Dendritic cell treated with granulocyte-macrophage colony-stimulating factor and Interleukin-4, amounts not matched to agents 40 ng/mL and 50 ng/mL, for 4 days (primary cell): ENCODE measurements at regions of chr14 and their contacts with region 1.

Region 1: DNA sequence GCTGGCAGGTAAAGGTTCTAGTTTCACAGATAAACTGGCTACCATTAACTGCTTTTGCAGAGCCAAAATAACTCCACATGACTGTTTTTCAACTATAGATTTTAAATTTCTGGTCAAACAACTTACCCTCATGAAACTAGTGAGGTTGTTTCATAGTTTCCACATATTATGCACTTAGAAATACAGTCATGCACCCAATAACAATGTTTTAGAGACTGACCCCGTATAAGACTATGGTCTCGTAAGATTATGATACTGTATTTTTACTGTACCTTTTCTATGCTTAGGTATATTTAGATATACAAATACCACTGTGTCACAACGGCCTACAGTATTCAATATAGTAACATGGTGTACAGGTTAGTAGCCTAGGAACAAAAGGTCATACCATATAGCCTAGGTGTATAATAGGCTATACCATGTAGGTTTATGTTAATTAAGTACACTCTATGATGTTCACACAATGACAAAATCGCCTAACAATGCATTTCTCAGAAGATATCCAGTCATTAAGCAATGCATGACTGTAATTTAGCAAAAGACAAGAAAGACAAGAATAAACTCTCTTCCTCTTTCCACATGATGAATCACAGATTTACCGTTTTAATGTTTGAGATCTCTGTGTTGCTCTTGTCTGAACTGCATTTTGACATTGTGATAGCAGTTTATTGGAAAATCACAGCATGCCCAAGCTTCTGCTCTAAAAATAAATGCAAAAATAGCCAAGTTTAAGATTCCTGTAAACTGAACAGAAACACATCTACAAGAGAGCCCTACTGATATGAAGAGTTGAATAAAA is 17.1 kb downstream of the DICER1 start:
- H3K4me3 Mint-ChIP-seq: no peak overlapping the region
- H3K27ac Mint-ChIP-seq: peak overlapping the region; percentile 62
- H3K4me1 Mint-ChIP-seq: peaks cover 37% of the 10 kb centered on the region
- H3K27me3 Mint-ChIP-seq: no peaks in the 10 kb centered on the region

Region 2: GRCh38 chr14:95068080-95068479 is 72.2 kb before region 1 on chr14:
- intact Hi-C with region 1: no loop called
- H3K4me3 Mint-ChIP-seq: no peak overlapping the region
- H3K27ac Mint-ChIP-seq: no peak overlapping the region
- H3K4me1 Mint-ChIP-seq: no peaks in the 10 kb centered on the region
- H3K27me3 Mint-ChIP-seq: peaks cover 13% of the 10 kb centered on the region

Region 3: DNA sequence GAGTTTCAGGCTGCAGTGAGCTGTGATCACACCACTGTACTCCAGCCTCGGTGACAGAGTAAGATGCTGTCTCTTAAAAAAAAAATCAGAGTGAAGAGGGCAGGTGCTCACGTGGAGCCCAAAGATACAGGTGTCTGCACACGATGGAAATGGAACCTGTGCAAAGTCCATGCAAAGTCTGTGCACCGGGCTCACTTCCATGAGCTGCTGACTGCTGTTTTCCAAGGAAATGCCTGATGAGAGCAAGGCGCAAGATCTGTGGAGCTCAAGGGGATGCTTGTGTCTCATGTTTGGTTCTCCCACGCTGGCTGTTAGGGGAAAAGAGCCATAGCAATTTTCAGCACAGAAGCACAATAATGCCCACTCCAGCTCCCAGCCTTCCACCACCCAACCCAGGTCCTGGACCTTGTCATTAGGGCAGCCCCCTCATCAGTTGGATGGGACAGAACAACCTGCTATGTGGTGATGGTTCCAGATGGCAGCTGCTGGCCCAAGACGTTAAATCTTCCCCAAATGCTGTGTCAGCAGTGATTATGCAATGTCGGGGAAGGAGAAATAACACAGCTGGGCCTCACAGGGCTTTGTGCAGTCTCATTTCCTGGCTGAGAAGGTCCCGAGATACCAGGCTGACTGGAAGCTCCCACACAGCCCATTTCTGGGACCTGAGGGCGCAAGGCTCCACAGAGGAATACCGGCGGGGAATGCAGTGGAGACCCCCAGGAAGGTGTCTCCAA is 44.9 kb after region 1 on chr14:
- intact Hi-C with region 1: loop called (anchors 5 kb)
- H3K4me3 Mint-ChIP-seq: peak overlapping the region; percentile 78
- H3K27ac Mint-ChIP-seq: peak overlapping the region; percentile 97
- H3K4me1 Mint-ChIP-seq: peaks cover 86% of the 10 kb centered on the region
- H3K27me3 Mint-ChIP-seq: no peaks in the 10 kb centered on the region